GM13977 (cell line): ENCODE measurements at regions of chr15 and their contacts with region 1.

Region 1: DNA sequence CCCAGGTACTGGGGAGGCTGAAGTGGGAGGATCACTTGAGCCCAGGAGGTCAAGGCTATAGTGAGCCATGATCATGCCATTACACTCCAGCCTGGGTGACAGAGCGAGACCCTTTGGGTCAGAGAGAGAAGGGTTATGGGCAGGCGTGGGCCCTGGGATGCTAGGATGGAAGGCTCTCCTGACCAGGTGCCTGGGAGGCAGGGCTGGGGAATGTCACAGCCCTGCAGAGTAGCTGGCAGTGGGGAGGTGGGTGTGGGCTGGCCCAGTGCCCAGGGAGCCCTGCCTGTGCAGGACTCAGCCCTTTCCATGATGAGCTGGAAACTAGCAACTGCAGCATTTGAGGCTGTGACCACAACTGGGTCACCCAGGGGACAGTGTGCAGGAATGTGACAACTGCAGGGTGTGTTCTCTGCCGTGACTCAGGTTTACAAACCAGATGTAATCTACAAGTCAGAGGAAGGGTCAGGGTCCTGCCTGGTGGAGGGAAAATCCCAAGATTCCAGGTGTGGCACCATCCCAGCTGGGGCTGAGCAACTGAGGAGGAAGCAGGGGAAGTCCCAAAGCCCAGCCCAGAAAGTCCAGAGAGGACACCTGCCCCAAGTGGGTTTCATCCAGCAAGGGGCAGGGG is 45.4 kb downstream of the SLC28A1 start:
- DNase-seq: no peak
- CTCF ChIP-seq: no peak

Region 2: GRCh38 chr15:84594617-84595290 is 335.1 kb before region 1 on chr15:
- in situ Hi-C with region 1: loop called (anchors 5 kb)
- DNase-seq: no peak
- CTCF ChIP-seq: no peak

Region 3: DNA sequence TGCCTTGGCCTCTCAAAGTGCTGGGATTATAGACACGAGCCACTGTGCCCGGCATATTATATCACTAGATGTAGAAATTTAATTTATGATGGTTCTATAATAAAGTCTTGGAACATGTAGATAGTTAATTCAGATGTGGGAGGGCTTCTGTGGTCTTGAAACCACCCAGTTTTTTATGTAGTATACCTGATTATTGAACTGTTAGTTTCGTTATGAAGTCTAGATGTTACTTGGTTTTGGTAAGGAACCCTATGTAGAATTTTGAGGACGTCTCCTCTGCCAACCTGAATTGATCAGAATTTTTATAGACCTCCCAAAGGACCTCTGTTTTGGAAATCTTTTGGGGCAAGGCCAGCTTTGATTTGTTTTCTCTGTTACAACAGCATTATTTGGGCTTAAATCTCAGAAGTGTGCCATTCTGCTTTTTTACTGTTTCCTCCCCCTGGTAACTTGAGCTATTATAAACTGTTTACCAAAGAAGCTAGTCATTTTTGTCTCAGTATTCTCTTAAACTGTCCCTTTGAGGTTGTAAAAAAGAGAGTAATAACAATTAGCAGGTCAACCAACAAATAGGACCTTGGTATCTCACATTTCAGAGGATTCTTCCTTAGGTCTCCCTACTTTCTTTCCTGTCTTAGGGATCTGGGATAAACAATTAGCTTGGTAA is 471.4 kb after region 1 on chr15:
- in situ Hi-C with region 1: no loop called
- DNase-seq: no peak
- CTCF ChIP-seq: no peak

Region 4: GRCh38 chr15:85592148-85592547 is 662.3 kb after region 1 on chr15:
- in situ Hi-C with region 1: no loop called
- DNase-seq: no peak
- CTCF ChIP-seq: no peak